ENCODE measurements at regions of chr7 and their contacts with region 1.

Region 1: DNA sequence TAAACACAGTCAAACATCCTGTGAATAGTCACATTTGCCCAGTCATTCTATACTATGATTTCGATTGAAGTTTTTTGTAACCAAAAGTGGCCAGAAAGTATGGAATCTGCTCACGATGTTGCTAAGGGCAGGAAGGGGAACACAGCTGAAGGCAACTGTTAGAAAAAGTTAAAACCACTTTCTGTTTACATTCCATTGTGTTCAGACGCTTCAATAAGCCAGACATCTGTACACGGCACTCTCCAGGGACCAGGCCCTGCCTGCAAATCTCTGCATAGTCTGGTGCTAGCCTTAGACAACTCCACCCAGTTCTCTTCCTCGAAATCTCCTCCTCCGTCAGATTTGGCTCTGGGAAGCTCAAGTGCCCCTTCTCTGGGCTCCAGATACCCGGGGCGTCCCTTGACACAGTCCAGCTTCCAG is 17.1 kb upstream of the TMEM120A start:
- DNase-seq: no peak
- H3K4me3 Mint-ChIP-seq: no peak overlapping the region
- H3K27ac Mint-ChIP-seq: no peak overlapping the region
- H3K4me1 Mint-ChIP-seq: peaks cover 25% of the 10 kb centered on the region
- H3K27me3 Mint-ChIP-seq: peaks cover 2% of the 10 kb centered on the region

Region 2: GRCh38 chr7:75776295-75776971 is 235.0 kb before region 1 on chr7:
- CTCF ChIA-PET with region 1: no interaction called
- intact Hi-C with region 1: loop called (anchors 1 kb)
- DNase-seq: peak; percentile 81
- H3K4me3 Mint-ChIP-seq: no peak overlapping the region
- H3K27ac Mint-ChIP-seq: peak overlapping the region; percentile 81
- H3K4me1 Mint-ChIP-seq: peaks cover 32% of the 10 kb centered on the region
- H3K27me3 Mint-ChIP-seq: peaks cover 7% of the 10 kb centered on the region

Region 3: GRCh38 chr7:75842836-75843446 is 168.5 kb before region 1 on chr7:
- CTCF ChIA-PET with region 1: no interaction called
- intact Hi-C with region 1: loop called (anchors 1 kb)
- DNase-seq: peak; percentile 65
- H3K4me3 Mint-ChIP-seq: no peak overlapping the region
- H3K27ac Mint-ChIP-seq: peak overlapping the region; percentile 74
- H3K4me1 Mint-ChIP-seq: peaks cover 13% of the 10 kb centered on the region
- H3K27me3 Mint-ChIP-seq: no peaks in the 10 kb centered on the region

Region 4: GRCh38 chr7:75866489-75867389 is 144.7 kb before region 1 on chr7:
- CTCF ChIA-PET with region 1: interaction called, 3 read pairs
- intact Hi-C with region 1: loop called (anchors 2 kb)
- DNase-seq: peak; percentile 67
- H3K4me3 Mint-ChIP-seq: no peak overlapping the region
- H3K27ac Mint-ChIP-seq: no peak overlapping the region
- H3K4me1 Mint-ChIP-seq: peaks cover 9% of the 10 kb centered on the region
- H3K27me3 Mint-ChIP-seq: no peaks in the 10 kb centered on the region

Region 5: GRCh38 chr7:75914730-75915585 is 96.5 kb before region 1 on chr7 and contains the start of gene POR:
- CTCF ChIA-PET with region 1: no interaction called
- intact Hi-C with region 1: loop called (anchors 5 kb)
- DNase-seq: peak; percentile 94
- H3K4me3 Mint-ChIP-seq: peak within 1 kb of the TSS; percentile 88
- H3K27ac Mint-ChIP-seq: peak within 1 kb of the TSS; percentile 85
- H3K4me1 Mint-ChIP-seq: peaks cover 30% of the 10 kb centered on the region
- H3K27me3 Mint-ChIP-seq: no peaks in the 10 kb centered on the region
- total RNA-seq, gene POR: 22.9 to 26.0 TPM

Region 6: DNA sequence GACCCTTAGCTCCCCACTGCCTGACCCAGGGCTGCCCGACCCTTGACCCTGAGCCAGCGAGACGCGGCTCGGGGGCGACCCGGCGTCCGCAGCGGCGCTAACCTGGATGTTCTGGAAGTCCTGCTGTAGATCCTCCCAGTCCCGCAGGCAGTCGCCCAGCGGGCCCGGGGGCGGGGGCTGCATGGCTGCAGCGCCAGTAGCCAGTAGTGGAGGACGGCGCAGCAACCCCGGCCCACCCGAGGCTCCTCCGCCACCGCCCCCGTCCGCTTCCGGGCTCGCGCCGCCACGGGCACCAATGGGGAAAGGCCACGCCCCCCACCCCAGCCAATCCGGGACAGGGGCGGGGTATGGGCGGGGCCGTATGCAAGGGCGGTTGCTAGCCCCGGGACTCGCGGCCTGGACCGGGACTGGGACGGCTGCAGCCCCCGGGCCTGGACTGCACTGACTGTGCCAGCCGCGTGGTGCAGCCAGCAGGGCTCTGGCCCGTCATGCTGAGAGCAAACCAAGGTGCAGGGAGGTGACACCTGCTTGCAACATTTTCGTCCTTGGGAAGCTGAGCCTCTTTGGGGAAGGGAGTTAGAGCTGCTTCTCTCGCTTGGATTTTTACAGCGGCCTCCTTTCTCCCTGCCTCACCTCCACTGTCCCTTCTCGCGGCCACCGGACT is 16.9 kb before region 1 on chr7 and contains the start of gene TMEM120A:
- CTCF ChIA-PET with region 1: interaction called, 3 read pairs
- intact Hi-C with region 1: loop called (anchors 1 kb)
- DNase-seq: peak; percentile 94
- H3K4me3 Mint-ChIP-seq: peak within 1 kb of the TSS; percentile 64
- H3K27ac Mint-ChIP-seq: no peak within 1 kb of the TSS
- H3K4me1 Mint-ChIP-seq: peaks cover 23% of the 10 kb centered on the region
- H3K27me3 Mint-ChIP-seq: no peaks in the 10 kb centered on the region
- total RNA-seq, gene TMEM120A: 17.0 to 22.4 TPM

Region 7: DNA sequence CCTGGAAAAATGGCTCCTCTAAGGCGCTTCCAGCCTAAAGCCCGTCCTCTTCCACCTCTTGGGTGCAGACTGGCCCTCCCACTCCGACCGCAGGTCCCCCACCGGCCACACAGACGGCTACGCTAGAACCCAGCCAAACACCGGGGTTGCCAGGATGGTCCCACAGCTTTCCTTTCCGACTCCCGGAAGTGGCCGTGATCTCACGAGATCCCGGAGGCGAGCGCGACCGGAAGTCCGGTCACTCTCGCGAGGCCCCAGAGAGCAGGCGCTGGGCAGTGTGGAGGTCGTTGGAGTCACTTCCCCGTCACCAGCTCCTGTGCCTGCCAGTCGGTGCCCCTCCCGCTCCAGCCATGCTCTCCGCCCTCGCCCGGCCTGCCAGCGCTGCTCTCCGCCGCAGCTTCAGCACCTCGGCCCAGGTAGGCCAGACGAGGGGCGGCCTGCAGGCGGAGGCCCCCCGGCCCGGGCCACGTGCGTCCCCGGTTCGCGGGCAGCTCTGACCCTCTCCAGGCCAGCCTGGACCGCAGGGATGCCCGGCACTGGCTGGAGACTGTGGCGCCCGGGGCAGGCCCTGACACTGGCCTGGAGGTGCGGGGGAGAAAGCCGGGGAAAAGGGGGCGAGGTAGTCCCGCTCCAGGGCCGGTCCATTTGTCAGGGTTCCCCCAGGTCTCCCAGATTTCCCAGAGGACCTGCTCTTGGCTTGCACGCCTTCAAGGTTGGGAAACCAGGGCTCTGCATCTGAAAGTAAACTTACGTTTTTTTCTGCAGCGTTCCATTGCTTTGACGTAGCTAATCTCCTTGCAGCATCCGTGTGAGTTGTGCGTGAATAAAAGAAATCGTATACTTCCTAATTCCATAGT is 36.6 kb after region 1 on chr7 and contains the starts of genes MDH2 and STYXL1:
- CTCF ChIA-PET with region 1: no interaction called
- intact Hi-C with region 1: loop called (anchors 5 kb)
- DNase-seq: peak; percentile 95
- H3K4me3 Mint-ChIP-seq: peak within 1 kb of the TSS; percentile 98
- H3K27ac Mint-ChIP-seq: peak within 1 kb of the TSS; percentile 96
- H3K4me1 Mint-ChIP-seq: peaks cover 54% of the 10 kb centered on the region
- H3K27me3 Mint-ChIP-seq: no peaks in the 10 kb centered on the region
- total RNA-seq, gene MDH2: 325 TPM
- total RNA-seq, gene STYXL1: 27.6 to 28.1 TPM

Region 8: GRCh38 chr7:76071316-76072242 is 60.1 kb after region 1 on chr7:
- CTCF ChIA-PET with region 1: no interaction called
- intact Hi-C with region 1: no loop called
- DNase-seq: no peak
- H3K4me3 Mint-ChIP-seq: no peak overlapping the region
- H3K27ac Mint-ChIP-seq: no peak overlapping the region
- H3K4me1 Mint-ChIP-seq: no peaks in the 10 kb centered on the region
- H3K27me3 Mint-ChIP-seq: no peaks in the 10 kb centered on the region

Measured in activated naive CD4-positive, alpha-beta T cell treated with anti-CD3 and anti-CD28 coated beads for 36 hours (primary cell).